Activated CD4-positive, alpha-beta T cell treated with anti-CD3 and anti-CD28 coated beads for 36 hours (primary cell): ENCODE measurements at regions of chr7 and their contacts with region 1.

Region 1: DNA sequence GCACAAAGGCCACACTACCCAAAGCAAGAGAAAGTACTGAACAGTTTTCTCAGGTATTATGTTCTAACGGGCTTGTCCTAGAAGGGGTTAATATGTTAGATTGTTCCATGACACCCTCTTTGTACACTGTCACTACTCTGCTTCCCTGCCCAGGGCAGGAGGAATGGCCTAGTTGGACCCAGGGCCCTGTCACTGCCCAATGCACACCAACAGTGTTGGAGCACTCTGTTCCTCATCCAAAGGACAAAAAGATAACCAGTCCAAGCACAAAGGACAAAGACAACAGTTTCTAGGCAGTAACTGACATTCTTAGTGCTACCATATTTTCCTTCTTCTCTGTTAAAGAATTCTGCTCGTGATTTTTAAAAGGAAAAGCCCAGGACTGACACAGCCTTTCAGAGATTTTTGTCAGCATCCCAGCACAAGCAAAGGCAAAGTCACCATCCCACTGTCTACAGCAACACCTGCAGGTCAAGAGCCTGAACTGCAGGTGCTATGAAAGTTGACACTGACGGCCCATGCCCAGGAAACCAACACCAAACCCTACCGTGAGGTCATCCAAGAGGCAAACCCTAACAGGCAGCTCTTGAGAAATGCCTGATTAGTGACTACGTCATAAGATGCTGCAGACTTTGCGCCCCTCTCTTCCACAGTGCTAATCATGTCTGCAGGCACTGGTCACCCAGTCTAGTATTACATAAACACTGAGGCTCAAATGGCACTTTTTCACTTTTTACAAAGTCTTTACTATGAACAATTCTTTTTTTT is 13.2 kb downstream of the NUDCD3 start:
- DNase-seq: peak; percentile 76
- ATAC-seq: peak; percentile 95
- H3K4me3 Mint-ChIP-seq: no peak overlapping the region
- H3K27ac Mint-ChIP-seq: no peak overlapping the region
- H3K4me1 Mint-ChIP-seq: peaks cover 32% of the 10 kb centered on the region
- H3K27me3 Mint-ChIP-seq: no peaks in the 10 kb centered on the region

Region 2: GRCh38 chr7:43639858-43640491 is 837.3 kb before region 1 on chr7:
- CTCF ChIA-PET with region 1: no interaction called
- POLR2A ChIA-PET with region 1: no interaction called
- intact Hi-C with region 1: no loop called
- DNase-seq: no peak
- ATAC-seq: no peak
- H3K4me3 Mint-ChIP-seq: no peak overlapping the region
- H3K27ac Mint-ChIP-seq: peak overlapping the region; percentile 76
- H3K4me1 Mint-ChIP-seq: peaks cover 90% of the 10 kb centered on the region
- H3K27me3 Mint-ChIP-seq: no peaks in the 10 kb centered on the region

Region 3: DNA sequence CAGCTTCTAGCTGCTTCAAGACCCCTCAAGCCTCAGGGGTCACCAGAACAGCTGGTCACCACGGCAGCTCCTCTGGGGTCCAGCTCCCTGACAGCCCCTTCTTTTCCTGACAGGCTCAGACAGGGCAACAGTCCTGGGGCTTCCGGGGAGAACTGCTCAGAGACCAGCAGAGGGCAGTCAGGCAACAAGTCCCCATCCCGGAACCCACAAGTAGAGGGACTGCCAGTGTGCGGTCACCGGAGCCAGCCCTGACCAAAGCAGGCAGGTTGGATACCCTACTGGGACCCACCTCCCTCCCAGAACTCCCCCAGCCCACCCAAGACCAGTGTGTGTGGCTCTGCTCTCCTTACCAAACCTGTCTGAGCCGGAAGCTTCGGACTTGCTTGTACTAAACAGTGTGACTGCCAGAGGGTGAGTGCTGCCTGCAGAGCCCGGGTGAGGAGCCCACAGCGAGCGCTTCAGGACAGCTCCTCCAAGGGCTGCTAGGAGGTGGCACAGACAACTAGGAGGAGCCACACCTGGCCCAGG is 236.2 kb before region 1 on chr7:
- CTCF ChIA-PET with region 1: interaction called, 8 read pairs
- POLR2A ChIA-PET with region 1: no interaction called
- intact Hi-C with region 1: loop called (anchors 1 kb)
- DNase-seq: peak; percentile 81
- ATAC-seq: peak; percentile 95
- H3K4me3 Mint-ChIP-seq: no peak overlapping the region
- H3K27ac Mint-ChIP-seq: peak overlapping the region; percentile 51
- H3K4me1 Mint-ChIP-seq: no peaks in the 10 kb centered on the region
- H3K27me3 Mint-ChIP-seq: no peaks in the 10 kb centered on the region

Region 4: DNA sequence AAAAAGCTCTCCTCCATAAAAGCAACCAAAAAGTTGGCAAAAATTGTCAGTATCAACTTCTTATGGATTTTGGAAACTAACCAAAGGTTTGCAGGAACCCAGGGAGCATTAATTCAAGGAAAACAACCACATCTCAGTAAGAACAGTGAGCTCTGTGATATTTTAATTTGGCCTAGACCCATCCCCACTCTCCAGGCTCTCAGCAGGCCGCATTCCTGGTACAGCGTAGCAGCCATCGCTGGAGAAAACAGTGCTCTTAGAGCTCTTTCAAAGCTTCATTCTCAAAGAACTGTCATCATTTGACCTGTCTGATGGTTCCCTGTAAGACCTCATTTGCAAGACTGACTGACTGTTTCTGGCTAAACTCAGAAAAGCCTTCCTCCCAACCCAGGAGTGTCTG is 68.7 kb before region 1 on chr7:
- CTCF ChIA-PET with region 1: interaction called, 4 read pairs
- POLR2A ChIA-PET with region 1: interaction called, 5 read pairs
- intact Hi-C with region 1: loop called in 1 of 2 experiments (anchors 5 kb)
- DNase-seq: no peak
- ATAC-seq: no peak
- H3K4me3 Mint-ChIP-seq: no peak overlapping the region
- H3K27ac Mint-ChIP-seq: no peak overlapping the region
- H3K4me1 Mint-ChIP-seq: peaks cover 8% of the 10 kb centered on the region
- H3K27me3 Mint-ChIP-seq: no peaks in the 10 kb centered on the region

Region 5: GRCh38 chr7:44439926-44440325 is 37.3 kb before region 1 on chr7:
- CTCF ChIA-PET with region 1: interaction called, 3 read pairs
- POLR2A ChIA-PET with region 1: no interaction called
- intact Hi-C with region 1: loop called in 1 of 2 experiments (anchors 5 kb)
- DNase-seq: no peak
- ATAC-seq: no peak
- H3K4me3 Mint-ChIP-seq: no peak overlapping the region
- H3K27ac Mint-ChIP-seq: no peak overlapping the region
- H3K4me1 Mint-ChIP-seq: peaks cover 54% of the 10 kb centered on the region
- H3K27me3 Mint-ChIP-seq: no peaks in the 10 kb centered on the region

Region 6: GRCh38 chr7:44466300-44467216 is 10.7 kb before region 1 on chr7:
- CTCF ChIA-PET with region 1: interaction called, 10 read pairs
- POLR2A ChIA-PET with region 1: no interaction called
- intact Hi-C with region 1: no loop called
- DNase-seq: peak; percentile 43
- ATAC-seq: peak; percentile 34
- H3K4me3 Mint-ChIP-seq: no peak overlapping the region
- H3K27ac Mint-ChIP-seq: peak overlapping the region; percentile 71
- H3K4me1 Mint-ChIP-seq: peaks cover 61% of the 10 kb centered on the region
- H3K27me3 Mint-ChIP-seq: no peaks in the 10 kb centered on the region